Activated CD8-positive, alpha-beta T cell treated with anti-CD3 and anti-CD28 coated beads for 36 hours (primary cell): ENCODE measurements at regions of chr7 and their contacts with region 1.

Region 1: DNA sequence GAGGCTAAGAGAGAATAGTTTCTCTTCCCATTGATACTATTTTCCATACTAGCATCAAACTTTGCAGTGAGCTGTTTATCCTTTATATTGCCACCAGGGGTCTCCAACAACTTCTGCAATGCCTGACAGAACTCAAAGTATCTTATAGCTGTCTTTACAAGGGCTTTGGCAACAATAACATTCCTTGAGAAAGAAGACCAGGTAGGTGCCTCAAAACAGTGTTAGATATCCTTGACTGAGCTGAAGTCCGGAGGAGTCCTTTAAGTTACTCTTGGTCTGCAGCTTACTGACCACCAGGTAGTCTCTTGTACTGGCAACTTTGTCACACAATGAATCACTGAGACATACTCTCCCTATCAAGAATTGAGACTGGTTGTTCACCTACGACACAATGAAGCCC is 30.0 kb upstream of the TES start:
- DNase-seq: peak; percentile 18
- ATAC-seq: peak; percentile 74
- H3K4me3 Mint-ChIP-seq: no peak overlapping the region
- H3K27ac Mint-ChIP-seq: no peak overlapping the region
- H3K4me1 Mint-ChIP-seq: no peaks in the 10 kb centered on the region
- H3K27me3 Mint-ChIP-seq: no peaks in the 10 kb centered on the region
- CTCF ChIP-seq: peak; percentile 82

Region 2: GRCh38 chr7:116165717-116166116 is 14.6 kb before region 1 on chr7:
- CTCF ChIA-PET with region 1: interaction called, 10 read pairs
- POLR2A ChIA-PET with region 1: no interaction called
- intact Hi-C with region 1: no loop called
- DNase-seq: no peak
- ATAC-seq: no peak
- H3K4me3 Mint-ChIP-seq: no peak overlapping the region
- H3K27ac Mint-ChIP-seq: no peak overlapping the region
- H3K4me1 Mint-ChIP-seq: peaks cover 8% of the 10 kb centered on the region
- H3K27me3 Mint-ChIP-seq: peaks cover 3% of the 10 kb centered on the region
- CTCF ChIP-seq: no peak

Region 3: GRCh38 chr7:116197360-116197759 is 17.1 kb after region 1 on chr7:
- CTCF ChIA-PET with region 1: interaction called, 33 read pairs
- POLR2A ChIA-PET with region 1: no interaction called
- intact Hi-C with region 1: no loop called
- DNase-seq: no peak
- ATAC-seq: no peak
- H3K4me3 Mint-ChIP-seq: no peak overlapping the region
- H3K27ac Mint-ChIP-seq: no peak overlapping the region
- H3K4me1 Mint-ChIP-seq: no peaks in the 10 kb centered on the region
- H3K27me3 Mint-ChIP-seq: peaks cover 2% of the 10 kb centered on the region
- CTCF ChIP-seq: no peak

Region 4: DNA sequence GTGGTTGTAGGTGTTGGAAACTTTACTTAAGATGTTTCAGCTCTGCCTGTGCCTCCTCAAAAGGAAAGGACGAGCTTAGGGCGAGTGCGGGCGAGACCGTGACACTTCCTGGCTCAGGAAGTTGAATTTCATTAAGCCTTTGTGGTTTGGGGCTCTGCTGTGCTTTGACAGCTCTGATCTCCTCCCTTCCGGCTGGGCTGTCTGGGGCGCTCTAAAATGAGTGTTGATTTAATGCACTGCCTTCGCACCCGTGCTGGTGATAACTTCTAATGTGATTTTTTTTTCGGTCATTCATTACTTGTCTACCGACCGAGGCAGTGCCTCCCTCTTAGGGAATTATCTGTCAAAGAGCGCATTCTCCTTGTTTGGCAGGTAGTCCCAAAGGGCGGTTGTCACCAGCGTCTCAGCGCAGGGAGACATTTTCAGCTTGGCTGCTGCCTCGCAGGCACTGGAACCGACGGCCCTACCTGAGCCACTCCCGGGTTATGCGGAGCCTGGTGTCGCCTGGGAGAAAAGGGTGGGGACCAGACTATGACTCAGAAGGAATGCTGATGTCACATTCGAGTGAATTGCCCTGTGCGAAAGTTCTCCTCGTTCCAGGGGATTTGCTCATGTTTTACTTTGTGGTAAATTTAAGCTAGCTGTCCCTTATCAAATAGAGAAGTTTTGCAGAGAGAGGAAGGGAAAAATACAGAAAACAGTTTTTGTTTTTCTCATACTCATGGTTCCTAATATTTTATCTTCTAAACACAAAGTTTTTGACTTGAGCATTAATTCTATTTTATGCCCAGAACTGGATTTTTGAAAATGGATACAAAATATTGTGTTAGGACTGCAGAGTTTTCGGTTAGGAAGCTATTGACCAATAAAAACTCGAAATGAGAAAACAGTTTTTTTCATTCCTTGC is 31.0 kb after region 1 on chr7:
- CTCF ChIA-PET with region 1: interaction called, 25 read pairs
- POLR2A ChIA-PET with region 1: no interaction called
- intact Hi-C with region 1: no loop called
- DNase-seq: peak; percentile 81
- ATAC-seq: peak; percentile 75
- H3K4me3 Mint-ChIP-seq: peak overlapping the region; percentile 97
- H3K27ac Mint-ChIP-seq: peak overlapping the region; percentile 97
- H3K4me1 Mint-ChIP-seq: peaks cover 50% of the 10 kb centered on the region
- H3K27me3 Mint-ChIP-seq: no peaks in the 10 kb centered on the region
- CTCF ChIP-seq: no peak

Region 5: GRCh38 chr7:116218051-116218645 is 37.8 kb after region 1 on chr7:
- CTCF ChIA-PET with region 1: interaction called, 25 read pairs
- POLR2A ChIA-PET with region 1: no interaction called
- intact Hi-C with region 1: no loop called
- DNase-seq: no peak
- ATAC-seq: no peak
- H3K4me3 Mint-ChIP-seq: no peak overlapping the region
- H3K27ac Mint-ChIP-seq: no peak overlapping the region
- H3K4me1 Mint-ChIP-seq: peaks cover 80% of the 10 kb centered on the region
- H3K27me3 Mint-ChIP-seq: no peaks in the 10 kb centered on the region
- CTCF ChIP-seq: no peak

Region 6: GRCh38 chr7:116249708-116250553 is 69.6 kb after region 1 on chr7:
- CTCF ChIA-PET with region 1: interaction called, 23 read pairs
- POLR2A ChIA-PET with region 1: no interaction called
- intact Hi-C with region 1: no loop called
- DNase-seq: peak; percentile 26
- ATAC-seq: peak; percentile 75
- H3K4me3 Mint-ChIP-seq: no peak overlapping the region
- H3K27ac Mint-ChIP-seq: no peak overlapping the region
- H3K4me1 Mint-ChIP-seq: peaks cover 26% of the 10 kb centered on the region
- H3K27me3 Mint-ChIP-seq: no peaks in the 10 kb centered on the region
- CTCF ChIP-seq: peak; percentile 34